ENCODE measurements at regions of chr1 and their contacts with region 1.

Region 1: GRCh38 chr1:92536980-92537884 is 50.5 kb upstream of the GFI1 start:
- DNase-seq: no peak
- H3K4me3 Mint-ChIP-seq: peak overlapping the region; percentile 59
- H3K27ac Mint-ChIP-seq: peak overlapping the region; percentile 88
- H3K4me1 Mint-ChIP-seq: peaks cover 79% of the 10 kb centered on the region
- H3K27me3 Mint-ChIP-seq: no peaks in the 10 kb centered on the region

Region 2: GRCh38 chr1:92563457-92564216 is 26.4 kb after region 1 on chr1:
- CTCF ChIA-PET with region 1: interaction called, 12 read pairs
- POLR2A ChIA-PET with region 1: interaction called, 18 read pairs
- DNase-seq: no peak
- H3K4me3 Mint-ChIP-seq: no peak overlapping the region
- H3K27ac Mint-ChIP-seq: peak overlapping the region; percentile 63
- H3K4me1 Mint-ChIP-seq: peaks cover 42% of the 10 kb centered on the region
- H3K27me3 Mint-ChIP-seq: no peaks in the 10 kb centered on the region

Region 3: GRCh38 chr1:92577261-92577895 is 40.1 kb after region 1 on chr1:
- CTCF ChIA-PET with region 1: interaction called, 4 read pairs
- POLR2A ChIA-PET with region 1: interaction called, 100 read pairs
- DNase-seq: no peak
- H3K4me3 Mint-ChIP-seq: peak overlapping the region; percentile 73
- H3K27ac Mint-ChIP-seq: peak overlapping the region; percentile 80
- H3K4me1 Mint-ChIP-seq: peaks cover 73% of the 10 kb centered on the region
- H3K27me3 Mint-ChIP-seq: no peaks in the 10 kb centered on the region

Region 4: DNA sequence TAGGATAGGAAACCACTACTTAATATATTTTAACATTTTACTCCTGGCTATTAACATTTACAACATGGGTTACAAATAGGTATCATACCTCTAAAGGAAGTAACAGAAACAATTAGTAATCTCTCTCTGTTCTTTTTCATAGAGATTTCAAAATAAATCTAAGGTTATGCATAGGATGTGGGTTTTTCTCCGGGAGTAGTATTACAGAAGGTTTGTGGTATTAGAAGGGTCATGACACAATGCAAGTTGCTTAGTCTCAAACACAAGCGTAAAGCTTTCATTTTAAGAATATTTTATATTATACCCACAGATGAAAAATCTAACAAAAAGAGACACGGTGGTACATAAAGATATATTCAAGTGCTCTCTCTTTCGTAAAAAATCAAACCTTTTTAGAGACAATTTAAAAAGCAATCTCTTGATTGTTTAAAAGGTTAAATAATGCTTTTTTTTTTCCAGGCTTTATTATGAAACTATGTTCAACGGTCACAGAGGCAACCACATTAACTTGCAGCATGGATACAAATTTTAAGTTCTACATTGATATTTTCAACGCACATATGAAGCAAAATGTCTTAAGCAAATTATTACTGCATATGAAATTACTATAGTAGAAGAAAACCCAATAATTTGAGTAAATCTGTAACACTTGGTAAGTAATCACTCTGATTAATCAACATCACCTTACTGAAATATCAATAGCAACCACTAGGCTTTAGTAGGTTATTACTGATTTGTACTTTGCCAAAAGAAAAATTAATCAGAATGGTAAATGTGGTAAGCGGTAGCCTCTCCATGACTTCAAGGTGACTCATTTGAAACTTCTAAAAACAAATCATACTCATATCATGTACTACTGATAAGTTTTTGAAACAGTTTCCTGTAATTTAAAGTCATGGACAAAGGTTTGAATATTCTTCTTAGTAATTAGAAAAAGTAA is 46.9 kb after region 1 on chr1:
- CTCF ChIA-PET with region 1: interaction called, 4 read pairs
- POLR2A ChIA-PET with region 1: interaction called, 100 read pairs
- DNase-seq: no peak
- H3K4me3 Mint-ChIP-seq: peak overlapping the region; percentile 67
- H3K27ac Mint-ChIP-seq: peak overlapping the region; percentile 92
- H3K4me1 Mint-ChIP-seq: peaks cover 62% of the 10 kb centered on the region
- H3K27me3 Mint-ChIP-seq: no peaks in the 10 kb centered on the region